Calu3 (cell line): ENCODE measurements at regions of chr1 and their contacts with region 1.

Region 1: GRCh38 chr1:40032240-40032891 is 8.2 kb upstream of the CAP1 start:
- DNase-seq: peak; percentile 60
- H3K4me3 Mint-ChIP-seq: no peak overlapping the region
- H3K27ac Mint-ChIP-seq: no peak overlapping the region
- H3K4me1 Mint-ChIP-seq: peaks cover 19% of the 10 kb centered on the region
- H3K27me3 Mint-ChIP-seq: peaks cover 17% of the 10 kb centered on the region
- CTCF ChIP-seq: peak; percentile 50

Region 2: DNA sequence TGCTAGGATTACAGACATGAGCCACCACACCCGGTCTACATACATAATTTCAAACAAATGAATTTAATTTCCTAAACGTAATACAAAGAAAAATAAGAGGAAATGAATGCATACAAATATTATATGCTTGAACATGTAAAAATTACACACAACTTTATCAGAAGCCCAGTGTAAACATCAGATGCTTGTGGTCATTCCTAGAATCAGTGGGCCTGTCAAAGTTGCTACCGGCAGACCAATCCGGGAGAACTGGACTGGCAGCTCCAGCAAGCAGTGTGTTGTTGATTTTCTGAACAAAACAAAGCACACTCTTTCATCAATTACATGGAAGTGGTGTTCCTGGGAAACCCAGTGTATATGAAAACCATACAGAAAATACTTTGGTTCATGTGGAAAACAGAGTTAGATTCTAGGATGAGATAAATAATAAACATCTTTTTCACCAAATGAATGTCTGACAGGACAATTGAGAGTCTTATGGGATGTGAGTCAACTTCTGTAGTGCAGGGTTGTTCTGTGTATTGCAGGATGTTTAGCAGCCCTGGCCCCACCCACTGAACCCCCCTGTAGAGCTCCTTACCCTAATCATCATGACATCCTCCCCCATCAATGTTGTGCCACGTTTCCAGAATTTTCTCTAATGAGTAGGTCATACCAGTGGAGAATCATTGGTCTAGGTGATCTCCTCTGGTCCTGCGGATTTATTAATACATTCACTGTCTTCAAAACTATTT is 43.6 kb before region 1 on chr1:
- CTCF ChIA-PET with region 1: no interaction called
- intact Hi-C with region 1: loop called (anchors 5 kb)
- DNase-seq: peak; percentile 73
- H3K4me3 Mint-ChIP-seq: no peak overlapping the region
- H3K27ac Mint-ChIP-seq: no peak overlapping the region
- H3K4me1 Mint-ChIP-seq: peaks cover 15% of the 10 kb centered on the region
- H3K27me3 Mint-ChIP-seq: no peaks in the 10 kb centered on the region
- CTCF ChIP-seq: no peak

Region 3: GRCh38 chr1:40049725-40050124 is 17.4 kb after region 1 on chr1:
- CTCF ChIA-PET with region 1: no interaction called
- intact Hi-C with region 1: no loop called
- DNase-seq: no peak
- H3K4me3 Mint-ChIP-seq: no peak overlapping the region
- H3K27ac Mint-ChIP-seq: no peak overlapping the region
- H3K4me1 Mint-ChIP-seq: peaks cover 3% of the 10 kb centered on the region
- H3K27me3 Mint-ChIP-seq: no peaks in the 10 kb centered on the region
- CTCF ChIP-seq: no peak